PC-9 (cell line): ENCODE measurements at regions of chr20 and their contacts with region 1.

Region 1: DNA sequence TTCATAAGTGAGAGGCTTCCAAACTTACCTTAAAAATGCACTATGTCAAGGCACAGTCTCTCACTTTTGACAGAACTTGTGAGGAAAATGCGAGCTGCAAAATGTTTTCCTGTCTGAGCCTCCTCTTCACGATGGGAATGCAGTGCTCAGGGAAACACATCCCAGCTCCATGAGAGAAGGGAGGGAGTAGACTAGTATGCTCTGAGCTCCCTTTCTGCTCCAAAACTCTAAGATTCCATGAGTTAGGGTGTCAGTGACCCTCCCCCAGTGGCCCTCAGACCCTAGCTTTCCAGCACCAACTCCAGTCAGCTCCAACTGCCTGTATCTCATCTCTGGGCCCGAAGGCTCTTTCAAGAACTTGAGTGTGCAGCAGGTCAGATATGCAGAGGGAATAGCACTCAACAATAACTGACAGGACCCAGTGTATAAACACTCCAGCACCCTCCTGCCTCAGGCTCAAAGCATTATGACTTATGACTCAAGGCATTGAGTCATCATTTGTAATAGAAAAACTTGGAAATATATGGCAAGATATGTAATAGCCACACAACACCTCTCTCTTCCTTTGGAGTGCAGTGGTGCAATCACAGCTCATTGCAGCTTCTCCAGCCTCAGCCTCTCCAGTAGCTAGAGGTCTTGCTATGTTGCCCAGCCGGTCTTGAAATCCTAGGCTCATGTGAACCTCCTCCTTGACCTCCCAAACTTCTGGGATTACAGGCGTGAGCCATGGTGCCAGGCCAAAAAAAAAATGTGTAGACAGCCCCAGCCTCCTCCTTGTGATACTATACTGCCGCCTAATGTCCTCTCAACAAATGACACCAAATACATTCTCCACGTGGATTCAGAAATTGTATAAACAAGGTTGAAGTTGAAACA is 16.7 kb upstream of the ENTPD6 start:
- DNase-seq: peak; percentile 89 to 99
- H3K4me3 ChIP-seq: no peak overlapping the region
- H3K27ac ChIP-seq: peak overlapping the region; percentile 73
- H3K4me1 ChIP-seq: peaks cover 52% of the 10 kb centered on the region
- H3K27me3 ChIP-seq: no peaks in the 10 kb centered on the region
- CTCF ChIP-seq: peak; percentile 90

Region 2: DNA sequence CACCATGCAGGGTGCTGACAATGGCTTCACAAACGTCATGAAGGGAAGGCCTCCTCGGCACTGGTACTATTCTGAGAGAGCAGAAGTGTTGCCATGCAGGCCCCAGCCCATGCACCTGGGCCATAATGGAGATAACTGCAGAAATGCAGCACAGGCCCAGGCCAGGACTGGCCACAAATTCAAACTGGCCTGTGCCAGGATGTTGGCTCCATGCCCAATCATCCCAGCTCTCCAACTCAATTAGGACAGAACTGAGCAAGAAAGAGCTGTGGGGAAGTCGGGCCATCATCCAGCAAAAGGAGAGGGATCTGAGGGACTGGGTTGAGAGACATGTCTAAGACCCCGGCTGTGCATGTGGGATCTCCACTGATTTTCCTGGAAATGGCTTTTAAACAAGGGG is 758.2 kb before region 1 on chr20:
- CTCF ChIA-PET with region 1: no interaction called
- POLR2A ChIA-PET with region 1: no interaction called
- intact Hi-C with region 1: no loop called
- DNase-seq: no peak
- H3K4me3 ChIP-seq: no peak overlapping the region
- H3K27ac ChIP-seq: no peak overlapping the region
- H3K4me1 ChIP-seq: no peaks in the 10 kb centered on the region
- H3K27me3 ChIP-seq: no peaks in the 10 kb centered on the region
- CTCF ChIP-seq: no peak

Region 3: GRCh38 chr20:24934101-24934661 is 244.6 kb before region 1 on chr20:
- CTCF ChIA-PET with region 1: no interaction called
- POLR2A ChIA-PET with region 1: no interaction called
- intact Hi-C with region 1: loop called (anchors 1 kb)
- DNase-seq: no peak
- H3K4me3 ChIP-seq: no peak overlapping the region
- H3K27ac ChIP-seq: no peak overlapping the region
- H3K4me1 ChIP-seq: peaks cover 27% of the 10 kb centered on the region
- H3K27me3 ChIP-seq: no peaks in the 10 kb centered on the region
- CTCF ChIP-seq: no peak

Region 4: GRCh38 chr20:25017257-25018115 is 161.3 kb before region 1 on chr20:
- CTCF ChIA-PET with region 1: no interaction called
- POLR2A ChIA-PET with region 1: no interaction called
- intact Hi-C with region 1: loop called (anchors 5 kb)
- DNase-seq: peak; percentile 87 to 94
- H3K4me3 ChIP-seq: peak overlapping the region; percentile 14; the same call in 1 of the 2 replicates
- H3K27ac ChIP-seq: peak overlapping the region; percentile 17; the same call in 1 of the 2 replicates
- H3K4me1 ChIP-seq: peaks cover 37% of the 10 kb centered on the region
- H3K27me3 ChIP-seq: no peaks in the 10 kb centered on the region
- CTCF ChIP-seq: no peak

Region 5: GRCh38 chr20:25090492-25091429 is 88.0 kb before region 1 on chr20:
- CTCF ChIA-PET with region 1: no interaction called
- POLR2A ChIA-PET with region 1: interaction called, 13 read pairs
- intact Hi-C with region 1: no loop called
- DNase-seq: peak in 1 of 2 experiments; percentile 46
- H3K4me3 ChIP-seq: no peak overlapping the region
- H3K27ac ChIP-seq: no peak overlapping the region
- H3K4me1 ChIP-seq: 0 out of 2 replicates have a peak, but pooled peaks cover 7% of the 10 kb centered on the region
- H3K27me3 ChIP-seq: no peaks in the 10 kb centered on the region
- CTCF ChIP-seq: no peak

Region 6: GRCh38 chr20:25160467-25160866 is 18.3 kb before region 1 on chr20:
- CTCF ChIA-PET with region 1: no interaction called
- POLR2A ChIA-PET with region 1: no interaction called
- intact Hi-C with region 1: no loop called
- DNase-seq: no peak
- H3K4me3 ChIP-seq: no peak overlapping the region
- H3K27ac ChIP-seq: no peak overlapping the region
- H3K4me1 ChIP-seq: no peaks in the 10 kb centered on the region
- H3K27me3 ChIP-seq: no peaks in the 10 kb centered on the region
- CTCF ChIP-seq: no peak

Region 7: GRCh38 chr20:25237610-25238318 is 59.0 kb after region 1 on chr20:
- CTCF ChIA-PET with region 1: no interaction called
- POLR2A ChIA-PET with region 1: no interaction called
- intact Hi-C with region 1: loop called (anchors 5 kb)
- DNase-seq: peak; percentile 82 to 99
- H3K4me3 ChIP-seq: no peak overlapping the region
- H3K27ac ChIP-seq: peak overlapping the region; percentile 98
- H3K4me1 ChIP-seq: peaks cover 77% of the 10 kb centered on the region
- H3K27me3 ChIP-seq: no peaks in the 10 kb centered on the region
- CTCF ChIP-seq: no peak

Region 8: GRCh38 chr20:25399037-25399430 is 220.2 kb after region 1 on chr20:
- CTCF ChIA-PET with region 1: no interaction called
- POLR2A ChIA-PET with region 1: no interaction called
- intact Hi-C with region 1: loop called (anchors 1 kb)
- DNase-seq: peak; percentile 52 to 67
- H3K4me3 ChIP-seq: no peak overlapping the region
- H3K27ac ChIP-seq: no peak overlapping the region
- H3K4me1 ChIP-seq: peaks cover 25% of the 10 kb centered on the region
- H3K27me3 ChIP-seq: no peaks in the 10 kb centered on the region
- CTCF ChIP-seq: peak; percentile 65